ENCODE measurements at regions of chrX and their contacts with region 1.

Region 1: GRCh38 chrX:20742106-20742505 is 475.4 kb upstream of the RPS6KA3 start:
- DNase-seq: no peak
- H3K4me3 ChIP-seq: no peak overlapping the region
- H3K27ac ChIP-seq: no peak overlapping the region
- H3K4me1 ChIP-seq: no peaks in the 10 kb centered on the region
- H3K27me3 ChIP-seq: no peaks in the 10 kb centered on the region
- CTCF ChIP-seq: no peak
- EP300 ChIP-seq: no peak
- POLR2A ChIP-seq: no peak
- RAD21 ChIP-seq: no peak

Region 2: GRCh38 chrX:20530406-20530921 is 211.6 kb before region 1 on chrX:
- CTCF ChIA-PET with region 1: interaction called, 11 read pairs
- POLR2A ChIA-PET with region 1: no interaction called
- DNase-seq: peak in 1 of 2 experiments; percentile 63
- H3K4me3 ChIP-seq: peak overlapping the region in 1 of 4 experiments; percentile 35; a peak in 1 of 8 replicates
- H3K27ac ChIP-seq: no peak overlapping the region
- H3K4me1 ChIP-seq: no peaks in the 10 kb centered on the region
- H3K27me3 ChIP-seq: no peaks in the 10 kb centered on the region
- CTCF ChIP-seq: peak; percentile 16 to 59 (median 45)
- EP300 ChIP-seq: no peak
- POLR2A ChIP-seq: no peak
- RAD21 ChIP-seq: peak; percentile 83 to 86

Measured in H1 (cell line).